ENCODE measurements at regions of chr2 and their contacts with region 1.

Region 1: DNA sequence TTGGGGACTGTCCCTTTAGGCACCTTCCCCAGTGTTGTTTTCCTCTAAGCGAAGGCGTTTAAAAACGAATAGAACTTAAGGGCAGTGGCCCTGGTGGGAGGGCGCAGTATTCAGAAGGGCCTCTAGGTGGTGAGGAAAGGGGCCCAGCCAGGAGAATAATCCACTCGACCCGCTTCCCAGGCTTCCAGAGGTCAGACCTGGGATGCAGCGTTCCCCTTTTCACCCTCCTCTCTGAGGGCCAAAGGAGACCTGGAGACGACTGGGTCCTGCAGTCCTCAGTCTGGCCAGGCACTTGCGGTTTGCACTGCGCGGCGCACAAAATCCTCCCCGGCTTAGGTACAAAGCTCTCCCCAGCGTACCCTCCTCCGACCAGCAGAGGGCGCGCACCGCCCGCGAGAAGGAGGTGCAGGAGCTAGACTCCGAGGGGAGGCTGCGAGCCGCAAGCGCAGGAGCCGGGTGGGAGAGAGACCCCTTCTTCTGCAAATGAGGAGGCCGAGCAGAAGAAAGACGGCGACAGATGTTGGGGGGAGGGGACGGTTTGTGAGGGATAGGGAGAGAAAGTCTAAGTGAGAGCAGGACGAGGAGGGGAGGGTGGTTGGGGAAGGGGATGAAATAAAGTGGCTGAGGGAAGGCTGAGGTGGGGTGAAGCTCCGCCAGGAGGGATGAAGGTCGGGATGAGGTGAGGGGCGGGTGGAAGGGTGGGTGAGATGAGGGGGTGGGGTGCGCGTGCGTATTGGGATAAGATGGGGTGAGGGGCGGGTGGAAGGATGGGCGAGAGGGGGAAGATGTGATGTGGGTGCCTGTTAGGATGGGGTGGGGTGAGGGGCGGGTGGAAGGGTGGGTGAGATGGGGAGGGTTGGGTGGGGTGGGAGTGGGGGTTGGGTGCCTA is 4.9 kb downstream of the FEV start:
- DNase-seq: peak; percentile 80
- H3K27ac ChIP-seq: no peak overlapping the region
- CTCF ChIP-seq: peak; percentile 96

Region 2: GRCh38 chr2:218898109-218898878 is 81.8 kb before region 1 on chr2:
- CTCF ChIA-PET with region 1: interaction called, 11 read pairs
- POLR2A ChIA-PET with region 1: no interaction called
- DNase-seq: peak; percentile 65
- H3K27ac ChIP-seq: peak overlapping the region; percentile 84
- CTCF ChIP-seq: peak; percentile 96

Region 3: GRCh38 chr2:218959141-218959731 is 20.9 kb before region 1 on chr2 and contains the start of gene CDK5R2:
- CTCF ChIA-PET with region 1: interaction called, 10 read pairs
- POLR2A ChIA-PET with region 1: no interaction called
- DNase-seq: peak; percentile 100
- H3K27ac ChIP-seq: no peak within 1 kb of the TSS
- CTCF ChIP-seq: no peak

Region 4: DNA sequence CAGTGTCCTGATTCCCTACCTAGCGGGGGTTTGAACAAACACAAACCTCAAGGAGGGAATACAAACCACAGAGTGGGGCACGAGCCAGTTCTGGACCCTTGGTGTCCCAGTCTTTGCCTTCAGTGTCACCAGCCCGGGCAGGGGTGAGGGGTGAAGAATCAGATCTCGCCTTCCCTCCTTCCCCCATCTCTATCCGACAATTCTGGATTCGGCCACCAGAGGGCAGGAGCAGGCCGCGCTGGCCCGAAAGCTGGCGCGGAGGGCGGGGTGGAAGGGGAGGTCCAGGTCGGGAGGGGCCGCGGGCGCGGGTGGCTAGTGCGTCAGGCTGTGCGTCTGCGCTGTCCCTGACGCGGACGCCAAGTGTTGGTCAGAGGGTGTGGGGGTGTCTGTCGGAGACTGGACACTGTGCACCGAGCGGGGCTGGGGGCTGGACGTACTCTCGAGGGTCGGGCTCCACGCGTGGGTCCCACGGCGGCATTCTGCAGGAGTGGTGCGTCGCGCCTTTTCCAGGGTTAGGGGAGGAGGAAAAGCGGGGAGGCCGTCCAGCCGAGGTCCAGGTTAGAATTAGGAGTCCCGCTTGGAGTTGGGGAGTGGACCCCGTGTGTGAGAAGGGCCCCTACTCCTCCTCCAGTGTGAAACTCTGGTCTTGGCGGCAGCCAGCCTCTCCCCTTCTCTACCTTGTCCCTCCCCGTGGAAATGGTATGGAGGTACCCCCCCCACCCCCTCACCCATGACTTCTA is 16.1 kb after region 1 on chr2:
- CTCF ChIA-PET with region 1: interaction called, 53 read pairs
- POLR2A ChIA-PET with region 1: no interaction called
- DNase-seq: peak; percentile 90
- H3K27ac ChIP-seq: no peak overlapping the region
- CTCF ChIP-seq: peak; percentile 90

Region 5: GRCh38 chr2:219002395-219003266 is 22.5 kb after region 1 on chr2:
- CTCF ChIA-PET with region 1: interaction called, 21 read pairs
- POLR2A ChIA-PET with region 1: no interaction called
- DNase-seq: no peak
- H3K27ac ChIP-seq: no peak overlapping the region
- CTCF ChIP-seq: peak; percentile 22

Region 6: GRCh38 chr2:220006152-220006621 is 1026.1 kb after region 1 on chr2:
- CTCF ChIA-PET with region 1: no interaction called
- POLR2A ChIA-PET with region 1: no interaction called
- DNase-seq: no peak
- H3K27ac ChIP-seq: no peak overlapping the region
- CTCF ChIP-seq: no peak

Measured in RWPE1 (cell line).